ENCODE measurements at regions of chr20 and their contacts with region 1.

Region 1: DNA sequence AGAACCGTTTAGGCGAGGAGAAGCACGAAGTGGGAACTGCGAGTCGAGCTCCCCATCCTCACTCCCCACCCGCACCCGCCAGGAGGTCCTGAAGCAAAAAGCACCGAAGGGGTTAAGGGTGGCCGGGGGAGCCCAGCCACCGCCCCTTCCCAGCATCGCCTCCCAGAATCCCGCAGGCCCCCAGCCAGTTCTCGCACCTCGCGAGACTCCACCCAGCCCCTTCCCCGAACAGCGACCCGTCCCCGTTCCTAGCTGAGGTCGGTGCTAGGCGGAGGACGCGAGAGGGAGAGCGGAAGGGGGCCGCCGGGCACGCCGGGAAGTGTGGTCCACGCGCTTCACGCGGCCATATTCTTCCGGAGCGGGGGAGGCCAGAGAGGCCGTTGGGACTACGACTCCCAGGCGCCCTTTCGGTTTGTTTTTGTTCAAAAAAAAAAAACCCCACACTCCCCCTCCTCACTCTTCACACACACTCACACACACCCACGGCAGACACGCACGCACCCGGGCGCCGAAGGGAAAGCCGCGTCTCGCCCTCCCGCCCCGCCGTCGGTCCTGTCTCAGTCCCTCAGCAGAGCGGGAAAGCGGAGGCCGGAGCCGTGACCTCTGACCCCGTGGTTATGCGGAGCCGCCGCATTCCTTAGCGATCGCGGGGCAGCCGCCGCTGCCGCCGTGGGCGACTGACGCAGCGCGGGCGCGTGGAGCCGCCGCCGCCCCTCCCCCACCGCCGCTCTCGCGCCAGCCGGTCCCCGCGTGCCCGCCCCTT is at the start of gene ASXL1:
- DNase-seq: peak; percentile 92 to 95 (median 94)
- H3K4me3 ChIP-seq: peak within 1 kb of the TSS; percentile 77 to 85
- H3K4me3 Mint-ChIP-seq: peak within 1 kb of the TSS; percentile 91 to 98 (median 97)
- H3K27ac ChIP-seq: peak within 1 kb of the TSS; percentile 92
- H3K27ac Mint-ChIP-seq: peak within 1 kb of the TSS; percentile 98 to 99 (median 99)
- H3K4me1 ChIP-seq: peaks cover 42% of the 10 kb centered on the region
- H3K4me1 Mint-ChIP-seq: peaks cover 27 to 53% (median 39%) of the 10 kb centered on the region in 4 donors
- H3K27me3 ChIP-seq: no peaks in the 10 kb centered on the region
- H3K27me3 Mint-ChIP-seq: no peaks in the 10 kb centered on the region
- total RNA-seq, gene ASXL1: 126 to 127 TPM

Region 2: DNA sequence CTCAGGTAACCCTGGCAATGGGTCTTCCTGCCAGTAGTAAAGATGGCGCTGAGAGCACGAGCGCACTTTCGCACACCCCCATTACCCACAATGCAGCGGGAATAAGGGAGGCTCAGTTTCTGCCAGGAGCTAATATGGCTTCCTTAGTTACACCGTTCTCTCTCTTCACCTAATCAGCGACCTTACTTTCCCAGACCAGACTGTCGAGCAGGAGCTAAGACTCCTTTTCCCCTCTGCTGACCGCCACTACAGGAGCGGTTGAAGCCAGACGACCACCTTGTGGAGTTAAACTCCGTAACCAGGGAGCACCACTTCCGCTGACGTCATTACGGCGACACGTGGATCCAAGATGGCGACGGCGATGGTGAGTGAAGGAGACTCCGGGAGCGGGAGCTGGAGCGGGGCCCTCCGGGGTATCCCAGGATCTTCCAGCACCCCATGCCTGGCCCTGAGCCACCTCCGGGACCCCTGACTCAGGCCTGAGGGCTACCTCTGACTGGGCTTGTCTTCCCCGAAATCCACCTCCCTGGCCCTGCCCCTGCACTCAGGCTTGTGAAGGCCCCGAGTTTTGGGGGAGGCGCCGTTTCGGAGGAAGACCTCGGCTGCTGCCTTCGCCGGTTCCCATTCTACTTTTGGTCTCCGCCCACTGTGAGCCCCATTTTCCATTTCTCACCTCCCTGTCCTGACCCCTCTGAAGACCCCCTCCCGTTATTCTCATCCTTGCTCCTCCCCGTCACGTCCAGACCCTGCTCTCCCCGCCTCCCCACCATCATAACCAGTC is 248.5 kb before region 1 on chr20 and contains the start of gene TM9SF4:
- CTCF ChIA-PET with region 1: no interaction called
- POLR2A ChIA-PET with region 1: interaction called, 9 read pairs
- intact Hi-C with region 1: loop called (anchors 1 kb)
- DNase-seq: peak; percentile 93 to 94 (median 94)
- H3K4me3 ChIP-seq: peak within 1 kb of the TSS; percentile 90 to 92
- H3K4me3 Mint-ChIP-seq: peak within 1 kb of the TSS; percentile 95 to 100 (median 98)
- H3K27ac ChIP-seq: peak within 1 kb of the TSS; percentile 100
- H3K27ac Mint-ChIP-seq: peak within 1 kb of the TSS; percentile 96 to 100 (median 100)
- H3K4me1 ChIP-seq: peaks cover 36% of the 10 kb centered on the region
- H3K4me1 Mint-ChIP-seq: peaks cover 26 to 44% (median 36%) of the 10 kb centered on the region in 4 donors
- H3K27me3 ChIP-seq: no peaks in the 10 kb centered on the region
- H3K27me3 Mint-ChIP-seq: no peaks in the 10 kb centered on the region
- total RNA-seq, gene TM9SF4: 36.4 to 40.7 TPM

Region 3: DNA sequence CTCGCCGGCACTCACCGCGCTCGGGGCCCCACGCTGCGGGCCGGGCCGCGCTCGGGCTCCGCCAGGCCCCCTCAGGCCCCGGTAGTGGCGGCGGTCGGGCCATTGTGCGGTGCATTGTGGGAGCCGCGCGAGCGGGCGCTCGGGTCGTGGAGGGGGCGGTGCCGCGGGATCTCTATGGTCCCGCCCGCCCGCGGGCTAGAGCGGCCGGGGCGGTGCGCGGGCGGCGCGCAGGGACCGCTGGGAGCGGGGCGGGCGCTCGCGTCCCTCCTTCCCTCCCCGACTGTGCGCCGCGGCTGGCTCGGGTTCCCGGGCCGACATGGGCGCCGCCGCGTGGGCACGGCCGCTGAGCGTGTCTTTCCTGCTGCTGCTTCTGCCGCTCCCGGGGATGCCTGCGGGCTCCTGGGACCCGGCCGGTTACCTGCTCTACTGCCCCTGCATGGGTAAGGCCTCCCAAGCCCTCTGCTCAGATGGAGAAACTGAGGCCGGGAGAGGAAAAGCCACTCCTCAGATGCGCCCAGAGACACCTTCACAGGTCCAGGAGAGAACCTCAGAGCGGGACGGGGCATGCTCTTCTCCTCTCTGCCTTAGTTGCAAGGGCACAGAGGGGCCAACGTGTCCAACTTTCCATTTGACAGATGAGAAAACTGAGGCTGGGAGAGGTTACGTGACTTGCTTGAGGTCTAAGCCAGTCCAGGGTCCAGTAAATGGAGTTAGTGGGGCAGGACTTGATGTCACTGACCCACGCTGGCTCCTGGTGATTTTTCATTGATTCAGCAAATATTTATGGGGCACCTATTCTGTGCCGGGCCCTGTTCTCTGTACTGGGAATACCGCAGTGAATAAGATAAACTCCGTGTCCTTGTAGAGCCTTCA is 150.2 kb before region 1 on chr20 and contains the starts of genes PLAGL2 and POFUT1:
- CTCF ChIA-PET with region 1: no interaction called
- POLR2A ChIA-PET with region 1: no interaction called
- intact Hi-C with region 1: no loop called
- DNase-seq: peak; percentile 84 to 91 (median 89)
- H3K4me3 ChIP-seq: peak within 1 kb of the TSS; percentile 62 to 94
- H3K4me3 Mint-ChIP-seq: peak within 1 kb of the TSS; percentile 90 to 97 (median 95)
- H3K27ac ChIP-seq: peak within 1 kb of the TSS; percentile 87
- H3K27ac Mint-ChIP-seq: peak within 1 kb of the TSS; percentile 90 to 99 (median 97)
- H3K4me1 ChIP-seq: peaks cover 70% of the 10 kb centered on the region
- H3K4me1 Mint-ChIP-seq: peaks cover 62 to 76% (median 72%) of the 10 kb centered on the region in 4 donors
- H3K27me3 ChIP-seq: no peaks in the 10 kb centered on the region
- H3K27me3 Mint-ChIP-seq: no peaks in the 10 kb centered on the region
- total RNA-seq, gene PLAGL2: 18.7 to 20.7 TPM
- total RNA-seq, gene POFUT1: 19.7 to 20.8 TPM

Region 4: GRCh38 chr20:32277361-32278198 is 80.5 kb before region 1 on chr20 and contains the start of gene KIF3B:
- CTCF ChIA-PET with region 1: interaction called, 3 read pairs
- POLR2A ChIA-PET with region 1: interaction called, 7 read pairs
- intact Hi-C with region 1: loop called (anchors 2 kb)
- DNase-seq: peak; percentile 87 to 90 (median 88)
- H3K4me3 ChIP-seq: peak within 1 kb of the TSS; percentile 68 to 96
- H3K4me3 Mint-ChIP-seq: peak within 1 kb of the TSS; percentile 91 to 94 (median 92)
- H3K27ac ChIP-seq: peak within 1 kb of the TSS; percentile 85
- H3K27ac Mint-ChIP-seq: peak within 1 kb of the TSS; percentile 88 to 98 (median 96)
- H3K4me1 ChIP-seq: peaks cover 27% of the 10 kb centered on the region
- H3K4me1 Mint-ChIP-seq: peaks cover 27 to 52% (median 42%) of the 10 kb centered on the region in 4 donors
- H3K27me3 ChIP-seq: no peaks in the 10 kb centered on the region
- H3K27me3 Mint-ChIP-seq: no peaks in the 10 kb centered on the region
- total RNA-seq, gene KIF3B: 14.2 to 14.5 TPM

Region 5: DNA sequence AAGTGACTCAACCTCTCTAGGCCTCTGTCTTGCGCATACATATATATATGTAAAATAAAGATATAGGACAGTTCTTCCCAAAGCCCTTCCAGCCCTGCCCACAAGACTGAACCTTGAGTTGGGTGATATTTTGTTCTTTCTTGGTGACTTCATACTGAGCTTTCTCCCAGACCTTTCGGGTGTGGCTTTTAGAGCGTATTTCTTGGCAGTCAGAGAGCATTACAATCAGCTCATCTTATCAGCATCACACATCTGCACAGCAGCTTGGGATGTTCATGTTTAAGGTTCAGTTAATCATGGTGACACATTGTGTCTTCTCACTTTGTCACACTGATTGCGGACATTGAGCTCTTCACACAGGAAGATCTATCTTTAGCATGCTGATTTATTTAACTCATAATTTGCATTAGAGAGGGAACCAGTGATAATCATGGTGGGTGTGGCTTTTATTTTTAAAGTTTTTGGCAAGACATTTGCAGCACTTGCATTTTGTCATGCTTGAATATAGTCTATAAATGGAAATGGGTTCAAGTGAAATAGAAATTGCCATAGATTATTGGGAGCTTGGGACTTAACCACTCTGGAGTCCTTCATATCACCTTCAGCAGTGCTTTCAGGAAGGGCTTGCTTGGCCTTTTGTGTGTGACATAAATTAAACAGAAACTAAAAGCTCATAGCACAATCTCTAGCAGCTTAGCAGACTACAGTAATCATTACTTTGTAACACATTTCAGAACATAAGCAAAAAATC is 72.3 kb before region 1 on chr20:
- CTCF ChIA-PET with region 1: interaction called, 3 read pairs
- POLR2A ChIA-PET with region 1: interaction called, 10 read pairs
- intact Hi-C with region 1: no loop called
- DNase-seq: peak; percentile 27 to 75 (median 39)
- H3K4me3 ChIP-seq: no peak overlapping the region
- H3K4me3 Mint-ChIP-seq: peak overlapping the region; percentile 24 to 80 (median 66)
- H3K27ac ChIP-seq: peak overlapping the region; percentile 60
- H3K27ac Mint-ChIP-seq: peak overlapping the region; percentile 70 to 91 (median 81)
- H3K4me1 ChIP-seq: peaks cover 34% of the 10 kb centered on the region
- H3K4me1 Mint-ChIP-seq: peaks cover 37 to 48% (median 41%) of the 10 kb centered on the region in 4 donors
- H3K27me3 ChIP-seq: no peaks in the 10 kb centered on the region
- H3K27me3 Mint-ChIP-seq: no peaks in the 10 kb centered on the region

Region 6: DNA sequence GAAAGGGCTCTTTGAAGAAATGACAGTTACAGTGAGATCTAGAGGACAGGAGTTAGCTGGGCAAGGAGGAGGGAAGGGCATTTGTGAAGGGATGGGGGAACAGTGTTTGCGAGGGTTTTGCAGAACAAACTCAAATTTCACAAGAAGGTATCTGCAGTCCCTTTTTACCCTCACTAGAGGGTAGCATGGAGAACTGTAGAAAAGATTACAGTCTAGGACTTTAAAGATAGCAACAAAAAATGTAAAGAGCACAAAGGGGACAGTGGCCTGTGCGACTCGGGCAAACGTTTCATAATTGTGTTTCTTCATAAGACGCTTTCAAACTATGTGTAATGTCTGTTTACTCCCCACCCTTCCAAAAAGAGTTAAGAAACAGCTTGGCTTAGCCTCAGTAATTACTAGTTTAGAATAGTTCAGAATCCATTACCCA is 21.1 kb before region 1 on chr20:
- CTCF ChIA-PET with region 1: no interaction called
- POLR2A ChIA-PET with region 1: interaction called, 9 read pairs
- intact Hi-C with region 1: loop called (anchors 2 kb)
- DNase-seq: peak in 1 of 5 donors; percentile 13
- H3K4me3 ChIP-seq: no peak overlapping the region
- H3K4me3 Mint-ChIP-seq: no peak overlapping the region
- H3K27ac ChIP-seq: no peak overlapping the region
- H3K27ac Mint-ChIP-seq: peak overlapping the region in 2 of 7 donors; percentile 7 to 17
- H3K4me1 ChIP-seq: peaks cover 27% of the 10 kb centered on the region
- H3K4me1 Mint-ChIP-seq: peaks cover 21 to 36% (median 26%) of the 10 kb centered on the region in 4 donors
- H3K27me3 ChIP-seq: no peaks in the 10 kb centered on the region
- H3K27me3 Mint-ChIP-seq: no peaks in the 10 kb centered on the region

Region 7: GRCh38 chr20:32819992-32820710 is 462.1 kb after region 1 on chr20:
- CTCF ChIA-PET with region 1: no interaction called
- POLR2A ChIA-PET with region 1: interaction called, 3 read pairs
- intact Hi-C with region 1: loop called (anchors 2 kb)
- DNase-seq: peak; percentile 85 to 93 (median 91)
- H3K4me3 ChIP-seq: peak overlapping the region; percentile 83 to 94
- H3K4me3 Mint-ChIP-seq: peak overlapping the region; percentile 96 to 99 (median 98)
- H3K27ac ChIP-seq: peak overlapping the region; percentile 90
- H3K27ac Mint-ChIP-seq: peak overlapping the region; percentile 98 to 100 (median 99)
- H3K4me1 ChIP-seq: peaks cover 49% of the 10 kb centered on the region
- H3K4me1 Mint-ChIP-seq: peaks cover 34 to 48% (median 40%) of the 10 kb centered on the region in 4 donors
- H3K27me3 ChIP-seq: no peaks in the 10 kb centered on the region
- H3K27me3 Mint-ChIP-seq: no peaks in the 10 kb centered on the region

Measured in CD4-positive, alpha-beta memory T cell (primary cell).